ENCODE measurements at regions of chr12 and their contacts with region 1.

Region 1: DNA sequence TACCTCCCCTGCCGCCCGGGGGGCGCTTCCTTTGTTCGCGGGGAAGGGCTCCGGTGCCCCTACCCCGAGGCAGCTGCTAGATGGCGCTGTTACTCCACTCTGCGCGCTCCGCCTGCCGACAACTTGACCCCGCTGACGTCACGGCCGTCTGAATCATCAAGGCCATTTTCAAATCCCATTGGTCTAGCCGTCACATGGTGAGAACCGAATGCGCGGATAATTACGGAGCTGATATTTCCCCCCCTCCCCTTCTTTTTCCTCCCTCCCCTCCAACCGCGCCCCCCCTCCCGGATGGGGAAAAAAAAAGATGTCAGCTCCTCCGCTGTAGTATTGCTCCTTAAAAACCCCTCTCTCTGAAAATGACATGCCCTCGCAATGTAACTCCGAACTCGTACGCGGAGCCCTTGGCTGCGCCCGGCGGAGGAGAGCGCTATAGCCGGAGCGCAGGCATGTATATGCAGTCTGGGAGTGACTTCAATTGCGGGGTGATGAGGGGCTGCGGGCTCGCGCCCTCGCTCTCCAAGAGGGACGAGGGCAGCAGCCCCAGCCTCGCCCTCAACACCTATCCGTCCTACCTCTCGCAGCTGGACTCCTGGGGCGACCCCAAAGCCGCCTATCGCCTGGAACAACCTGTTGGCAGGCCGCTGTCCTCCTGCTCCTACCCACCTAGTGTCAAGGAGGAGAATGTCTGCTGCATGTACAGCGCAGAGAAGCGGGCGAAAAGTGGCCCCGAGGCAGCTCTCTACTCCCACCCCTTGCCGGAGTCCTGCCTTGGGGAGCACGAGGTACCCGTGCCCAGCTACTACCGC is at the start of gene HOXC10:
- DNase-seq: peak; percentile 95
- ATAC-seq: peak; percentile 49
- H3K4me3 ChIP-seq: peak within 1 kb of the TSS; percentile 66 to 67
- H3K27ac ChIP-seq: peak within 1 kb of the TSS; percentile 100
- H3K4me1 ChIP-seq: peaks cover 22% of the 10 kb centered on the region
- H3K27me3 ChIP-seq: no peaks in the 10 kb centered on the region
- CTCF ChIP-seq: peak; percentile 88
- total RNA-seq, gene HOXC10: 154 TPM

Region 2: GRCh38 chr12:53379389-53380103 is 605.6 kb before region 1 on chr12:
- CTCF ChIA-PET with region 1: no interaction called
- POLR2A ChIA-PET with region 1: no interaction called
- in situ Hi-C with region 1: no loop called
- intact Hi-C with region 1: loop called (anchors 10 kb)
- DNase-seq: peak; percentile 100
- ATAC-seq: peak; percentile 88
- H3K4me3 ChIP-seq: peak overlapping the region; percentile 49 to 54
- H3K27ac ChIP-seq: peak overlapping the region; percentile 99
- H3K4me1 ChIP-seq: peaks cover 25% of the 10 kb centered on the region
- H3K27me3 ChIP-seq: no peaks in the 10 kb centered on the region
- CTCF ChIP-seq: no peak

Region 3: GRCh38 chr12:53770281-53770680 is 214.8 kb before region 1 on chr12:
- CTCF ChIA-PET with region 1: no interaction called
- POLR2A ChIA-PET with region 1: no interaction called
- in situ Hi-C with region 1: no loop called
- intact Hi-C with region 1: loop called (anchors 2 kb)
- DNase-seq: peak; percentile 91
- ATAC-seq: peak; percentile 93
- H3K4me3 ChIP-seq: no peak overlapping the region
- H3K27ac ChIP-seq: peak overlapping the region; percentile 98
- H3K4me1 ChIP-seq: peaks cover 51% of the 10 kb centered on the region
- H3K27me3 ChIP-seq: no peaks in the 10 kb centered on the region
- CTCF ChIP-seq: no peak

Region 4: GRCh38 chr12:53825246-53826081 is 159.6 kb before region 1 on chr12:
- CTCF ChIA-PET with region 1: interaction called, 3 read pairs
- POLR2A ChIA-PET with region 1: interaction called, 4 read pairs
- in situ Hi-C with region 1: no loop called
- intact Hi-C with region 1: loop called (anchors 5 kb)
- DNase-seq: peak; percentile 95
- ATAC-seq: peak; percentile 96
- H3K4me3 ChIP-seq: no peak overlapping the region
- H3K27ac ChIP-seq: peak overlapping the region; percentile 99
- H3K4me1 ChIP-seq: peaks cover 87% of the 10 kb centered on the region
- H3K27me3 ChIP-seq: no peaks in the 10 kb centered on the region
- CTCF ChIP-seq: no peak

Region 5: GRCh38 chr12:53995378-53996239 is 10.5 kb after region 1 on chr12:
- CTCF ChIA-PET with region 1: interaction called, 14 read pairs
- POLR2A ChIA-PET with region 1: interaction called, 16 read pairs
- in situ Hi-C with region 1: no loop called
- intact Hi-C with region 1: no loop called
- DNase-seq: no peak
- ATAC-seq: peak; percentile 15
- H3K4me3 ChIP-seq: peak overlapping the region; percentile 66 to 67
- H3K27ac ChIP-seq: peak overlapping the region; percentile 99
- H3K4me1 ChIP-seq: peaks cover 11% of the 10 kb centered on the region
- H3K27me3 ChIP-seq: no peaks in the 10 kb centered on the region
- CTCF ChIP-seq: no peak

Region 6: GRCh38 chr12:54025499-54026405 is 40.6 kb after region 1 on chr12:
- CTCF ChIA-PET with region 1: interaction called, 10 read pairs
- POLR2A ChIA-PET with region 1: no interaction called
- in situ Hi-C with region 1: no loop called
- intact Hi-C with region 1: no loop called
- DNase-seq: no peak
- ATAC-seq: no peak
- H3K4me3 ChIP-seq: peak overlapping the region; percentile 9 to 39; a peak in 3 of 4 replicates
- H3K27ac ChIP-seq: peak overlapping the region; percentile 95
- H3K4me1 ChIP-seq: peaks cover 93% of the 10 kb centered on the region
- H3K27me3 ChIP-seq: no peaks in the 10 kb centered on the region
- CTCF ChIP-seq: peak; percentile 11